ENCODE measurements at regions of chr6 and their contacts with region 1.

Region 1: GRCh38 chr6:37705239-37706051 is 7.8 kb upstream of the MDGA1 start:
- DNase-seq: peak; percentile 54 to 90 (median 70)
- ATAC-seq: peak; percentile 92
- H3K4me3 ChIP-seq: peak overlapping the region; percentile 64
- H3K4me3 Mint-ChIP-seq: peak overlapping the region; percentile 86
- H3K27ac ChIP-seq: no peak overlapping the region
- H3K27ac Mint-ChIP-seq: peak overlapping the region; percentile 55
- H3K4me1 ChIP-seq: peaks cover 16% of the 10 kb centered on the region
- H3K4me1 Mint-ChIP-seq: peaks cover 6% of the 10 kb centered on the region
- H3K27me3 ChIP-seq: no peaks in the 10 kb centered on the region
- H3K27me3 Mint-ChIP-seq: peaks cover 17% of the 10 kb centered on the region
- CTCF ChIP-seq: no peak

Region 2: GRCh38 chr6:37429352-37429750 is 276.1 kb before region 1 on chr6:
- CTCF ChIA-PET with region 1: no interaction called
- POLR2A ChIA-PET with region 1: no interaction called
- intact Hi-C with region 1: no loop called
- DNase-seq: no peak
- ATAC-seq: no peak
- H3K4me3 ChIP-seq: no peak overlapping the region
- H3K4me3 Mint-ChIP-seq: no peak overlapping the region
- H3K27ac ChIP-seq: no peak overlapping the region
- H3K27ac Mint-ChIP-seq: no peak overlapping the region
- H3K4me1 ChIP-seq: peaks cover 17% of the 10 kb centered on the region
- H3K4me1 Mint-ChIP-seq: peaks cover 19% of the 10 kb centered on the region
- H3K27me3 ChIP-seq: no peaks in the 10 kb centered on the region
- H3K27me3 Mint-ChIP-seq: peaks cover 21% of the 10 kb centered on the region
- CTCF ChIP-seq: no peak

Region 3: GRCh38 chr6:37588735-37589108 is 116.7 kb before region 1 on chr6:
- CTCF ChIA-PET with region 1: no interaction called
- POLR2A ChIA-PET with region 1: no interaction called
- intact Hi-C with region 1: no loop called
- DNase-seq: no peak
- ATAC-seq: no peak
- H3K4me3 ChIP-seq: no peak overlapping the region
- H3K4me3 Mint-ChIP-seq: no peak overlapping the region
- H3K27ac ChIP-seq: no peak overlapping the region
- H3K27ac Mint-ChIP-seq: no peak overlapping the region
- H3K4me1 ChIP-seq: no peaks in the 10 kb centered on the region
- H3K4me1 Mint-ChIP-seq: no peaks in the 10 kb centered on the region
- H3K27me3 ChIP-seq: no peaks in the 10 kb centered on the region
- H3K27me3 Mint-ChIP-seq: no peaks in the 10 kb centered on the region
- CTCF ChIP-seq: no peak

Region 4: GRCh38 chr6:37783856-37784584 is 78.6 kb after region 1 on chr6:
- CTCF ChIA-PET with region 1: no interaction called
- POLR2A ChIA-PET with region 1: no interaction called
- intact Hi-C with region 1: no loop called
- DNase-seq: peak in 4 of 14 experiments; percentile 11 to 28 (median 22)
- ATAC-seq: peak; percentile 54
- H3K4me3 ChIP-seq: peak overlapping the region; percentile 50
- H3K4me3 Mint-ChIP-seq: peak overlapping the region; percentile 79
- H3K27ac ChIP-seq: no peak overlapping the region
- H3K27ac Mint-ChIP-seq: no peak overlapping the region
- H3K4me1 ChIP-seq: peaks cover 17% of the 10 kb centered on the region
- H3K4me1 Mint-ChIP-seq: peaks cover 17% of the 10 kb centered on the region
- H3K27me3 ChIP-seq: peaks cover 20 to 23% of the 10 kb centered on the region in 2 experiments
- H3K27me3 Mint-ChIP-seq: peaks cover 41% of the 10 kb centered on the region
- CTCF ChIP-seq: no peak

Region 5: DNA sequence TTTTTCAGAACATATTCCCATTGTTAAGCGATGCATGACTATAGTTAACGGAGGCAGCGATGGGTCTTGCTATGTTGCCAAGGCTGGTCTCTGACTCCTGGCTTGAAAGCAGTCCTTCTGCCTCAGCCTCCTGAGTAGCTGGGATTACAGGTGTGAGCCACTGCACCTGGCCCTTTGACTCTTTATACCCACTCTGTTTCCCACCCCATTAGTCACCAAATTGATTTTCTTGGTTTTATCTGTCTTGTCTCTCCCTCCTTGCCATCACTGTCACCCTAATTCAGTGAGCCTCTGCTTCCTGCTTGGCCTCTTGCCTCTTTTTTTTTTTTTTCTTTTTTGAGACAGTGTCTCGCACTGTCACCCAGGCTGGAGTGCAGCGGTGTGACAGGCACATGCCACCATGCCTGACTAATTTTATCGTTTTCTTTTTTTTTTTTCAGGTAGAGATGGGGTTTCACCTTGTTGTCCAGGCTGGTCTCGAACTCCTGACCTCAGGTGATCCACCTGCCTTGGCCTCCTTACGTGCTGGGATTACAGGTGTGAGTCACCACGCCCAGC is 145.4 kb after region 1 on chr6:
- CTCF ChIA-PET with region 1: no interaction called
- POLR2A ChIA-PET with region 1: no interaction called
- intact Hi-C with region 1: loop called in 1 of 2 experiments (anchors 10 kb)
- DNase-seq: peak in 1 of 14 experiments; percentile 7
- ATAC-seq: no peak
- H3K4me3 ChIP-seq: no peak overlapping the region
- H3K4me3 Mint-ChIP-seq: no peak overlapping the region
- H3K27ac ChIP-seq: no peak overlapping the region
- H3K27ac Mint-ChIP-seq: no peak overlapping the region
- H3K4me1 ChIP-seq: peaks cover 9% of the 10 kb centered on the region
- H3K4me1 Mint-ChIP-seq: peaks cover 81% of the 10 kb centered on the region
- H3K27me3 ChIP-seq: no peaks in the 10 kb centered on the region
- H3K27me3 Mint-ChIP-seq: no peaks in the 10 kb centered on the region
- CTCF ChIP-seq: no peak